AG04450 (cell line): ENCODE measurements at regions of chr5 and their contacts with region 1.

Region 1: GRCh38 chr5:116068028-116068632 is 16.7 kb upstream of the COMMD10 start:
- DNase-seq: peak; percentile 29
- H3K4me3 ChIP-seq: no peak overlapping the region
- H3K27ac ChIP-seq: no peak overlapping the region
- H3K27me3 ChIP-seq: no peaks in the 10 kb centered on the region
- CTCF ChIP-seq: peak; percentile 78

Region 2: DNA sequence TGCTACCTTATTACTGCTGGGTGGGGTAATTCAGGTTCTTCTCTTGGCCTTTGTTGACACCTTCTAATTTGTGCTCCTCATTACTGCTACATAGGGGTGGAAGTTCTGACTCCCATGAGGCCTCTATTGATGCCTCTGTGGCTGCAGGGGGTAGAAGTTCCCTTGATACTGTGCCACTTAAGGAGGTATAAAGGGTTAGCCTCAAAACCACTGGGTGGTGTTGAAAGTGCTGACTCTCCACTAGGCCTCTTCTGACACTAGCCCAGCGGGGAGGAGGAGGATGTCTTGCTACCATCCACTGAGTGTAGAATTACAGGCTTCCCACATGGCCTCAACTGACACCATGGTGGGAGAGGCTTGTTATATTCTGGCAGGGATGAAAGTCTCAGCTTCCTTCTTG is 735.0 kb before region 1 on chr5:
- CTCF ChIA-PET with region 1: no interaction called
- POLR2A ChIA-PET with region 1: no interaction called
- DNase-seq: no peak
- H3K4me3 ChIP-seq: no peak overlapping the region
- H3K27ac ChIP-seq: no peak overlapping the region
- H3K27me3 ChIP-seq: no peaks in the 10 kb centered on the region
- CTCF ChIP-seq: no peak

Region 3: DNA sequence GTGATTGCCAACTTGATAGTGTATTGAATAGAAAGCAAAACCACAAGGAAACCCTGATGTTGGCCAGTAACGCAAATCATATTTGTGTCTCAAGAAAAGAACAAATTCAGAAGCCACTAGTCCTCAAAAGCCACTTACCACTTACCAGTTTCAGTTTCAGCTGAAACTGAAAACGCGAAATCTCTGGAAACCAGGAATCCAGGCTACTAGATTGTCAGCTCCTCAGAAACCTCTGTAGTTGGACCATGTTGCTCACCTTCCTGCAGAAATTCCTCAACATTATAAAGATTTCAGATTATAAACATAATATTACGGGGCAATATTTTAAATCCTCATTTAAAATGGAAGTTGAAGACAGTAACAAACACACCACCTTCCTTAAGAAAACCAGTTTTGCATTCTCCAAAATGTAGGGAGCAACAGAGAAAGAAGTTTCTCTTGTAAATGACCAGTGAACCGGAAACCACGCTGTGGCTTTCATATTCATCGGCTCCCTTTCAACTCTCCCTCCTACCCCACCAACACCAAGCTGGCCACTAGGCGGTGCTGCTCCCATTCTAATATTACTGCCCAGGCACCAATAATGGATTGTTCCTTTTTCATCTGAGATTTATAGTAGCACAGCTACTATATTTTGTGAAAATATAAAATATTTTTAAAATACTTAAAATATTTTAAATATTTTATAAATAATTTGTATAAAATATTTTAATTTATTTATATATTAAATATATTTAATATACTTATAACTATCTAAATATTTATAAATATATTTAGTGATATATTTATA is 433.6 kb before region 1 on chr5:
- CTCF ChIA-PET with region 1: interaction called, 51 read pairs
- POLR2A ChIA-PET with region 1: no interaction called
- DNase-seq: peak; percentile 51
- H3K4me3 ChIP-seq: peak overlapping the region; percentile 46
- H3K27ac ChIP-seq: no peak overlapping the region
- H3K27me3 ChIP-seq: peaks cover 4% of the 10 kb centered on the region
- CTCF ChIP-seq: peak; percentile 99

Region 4: GRCh38 chr5:115888027-115888426 is 180.1 kb before region 1 on chr5:
- CTCF ChIA-PET with region 1: interaction called, 57 read pairs
- POLR2A ChIA-PET with region 1: no interaction called
- DNase-seq: no peak
- H3K4me3 ChIP-seq: no peak overlapping the region
- H3K27ac ChIP-seq: no peak overlapping the region
- H3K27me3 ChIP-seq: no peaks in the 10 kb centered on the region
- CTCF ChIP-seq: peak; percentile 44

Region 5: GRCh38 chr5:115898656-115899055 is 169.5 kb before region 1 on chr5:
- CTCF ChIA-PET with region 1: interaction called, 11 read pairs
- POLR2A ChIA-PET with region 1: no interaction called
- DNase-seq: no peak
- H3K4me3 ChIP-seq: no peak overlapping the region
- H3K27ac ChIP-seq: peak overlapping the region; percentile 49
- H3K27me3 ChIP-seq: no peaks in the 10 kb centered on the region
- CTCF ChIP-seq: no peak

Region 6: GRCh38 chr5:116088062-116088461 is 19.9 kb after region 1 on chr5:
- CTCF ChIA-PET with region 1: no interaction called
- POLR2A ChIA-PET with region 1: no interaction called
- DNase-seq: no peak
- H3K4me3 ChIP-seq: no peak overlapping the region
- H3K27ac ChIP-seq: no peak overlapping the region
- H3K27me3 ChIP-seq: no peaks in the 10 kb centered on the region
- CTCF ChIP-seq: no peak

Region 7: GRCh38 chr5:116472277-116472676 is 404.1 kb after region 1 on chr5:
- CTCF ChIA-PET with region 1: no interaction called
- POLR2A ChIA-PET with region 1: no interaction called
- DNase-seq: no peak
- H3K4me3 ChIP-seq: no peak overlapping the region
- H3K27ac ChIP-seq: no peak overlapping the region
- H3K27me3 ChIP-seq: no peaks in the 10 kb centered on the region
- CTCF ChIP-seq: no peak